Activated CD4-positive, alpha-beta memory T cell treated with anti-CD3 and anti-CD28 coated beads for 36 hours (primary cell): ENCODE measurements at regions of chr13 and their contacts with region 1.

Region 1: DNA sequence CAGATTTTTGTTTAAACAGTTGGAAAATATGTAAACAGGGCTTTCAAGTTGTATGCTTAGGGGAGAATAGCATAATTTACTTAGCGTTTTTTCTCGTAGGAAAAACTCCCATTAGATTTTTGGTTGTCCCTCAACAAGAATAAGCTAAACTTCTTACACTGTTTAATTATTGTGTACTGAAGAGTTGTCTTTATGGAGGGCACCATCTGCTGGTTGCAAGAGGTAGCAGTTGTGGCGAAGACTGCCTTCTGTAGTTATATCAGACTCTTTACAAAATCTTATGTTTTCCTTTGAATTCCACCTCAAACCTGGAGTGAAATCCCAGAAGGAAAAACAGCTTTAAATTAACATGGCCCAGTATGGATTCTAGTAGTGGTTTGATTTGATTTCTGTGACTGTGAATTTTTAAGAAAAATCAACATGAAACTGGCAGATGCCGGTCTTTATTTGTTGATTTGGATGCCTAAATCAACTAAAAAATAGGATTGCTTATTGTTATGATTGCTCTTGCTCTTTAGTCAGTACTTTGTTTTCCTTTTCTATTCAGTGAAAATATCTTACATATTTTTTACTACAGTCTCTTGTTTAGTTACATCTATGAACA is 53.4 kb downstream of the PDS5B start:
- DNase-seq: peak; percentile 56
- H3K4me3 Mint-ChIP-seq: no peak overlapping the region
- H3K27ac Mint-ChIP-seq: no peak overlapping the region
- H3K4me1 Mint-ChIP-seq: peaks cover 41% of the 10 kb centered on the region
- H3K27me3 Mint-ChIP-seq: no peaks in the 10 kb centered on the region

Region 2: GRCh38 chr13:32472194-32472621 is 167.4 kb before region 1 on chr13:
- CTCF ChIA-PET with region 1: interaction called, 3 read pairs
- POLR2A ChIA-PET with region 1: no interaction called
- intact Hi-C with region 1: loop called (anchors 5 kb)
- DNase-seq: no peak
- H3K4me3 Mint-ChIP-seq: no peak overlapping the region
- H3K27ac Mint-ChIP-seq: peak overlapping the region; percentile 84
- H3K4me1 Mint-ChIP-seq: peaks cover 18% of the 10 kb centered on the region
- H3K27me3 Mint-ChIP-seq: no peaks in the 10 kb centered on the region

Region 3: GRCh38 chr13:32622827-32623226 is 16.8 kb before region 1 on chr13:
- CTCF ChIA-PET with region 1: interaction called, 15 read pairs
- POLR2A ChIA-PET with region 1: interaction called, 3 read pairs
- intact Hi-C with region 1: loop called (anchors 1 kb)
- DNase-seq: peak; percentile 56
- H3K4me3 Mint-ChIP-seq: no peak overlapping the region
- H3K27ac Mint-ChIP-seq: peak overlapping the region; percentile 83
- H3K4me1 Mint-ChIP-seq: peaks cover 48% of the 10 kb centered on the region
- H3K27me3 Mint-ChIP-seq: no peaks in the 10 kb centered on the region

Region 4: GRCh38 chr13:32669030-32669646 is 29.5 kb after region 1 on chr13:
- CTCF ChIA-PET with region 1: interaction called, 10 read pairs
- POLR2A ChIA-PET with region 1: no interaction called
- intact Hi-C with region 1: no loop called
- DNase-seq: no peak
- H3K4me3 Mint-ChIP-seq: no peak overlapping the region
- H3K27ac Mint-ChIP-seq: no peak overlapping the region
- H3K4me1 Mint-ChIP-seq: no peaks in the 10 kb centered on the region
- H3K27me3 Mint-ChIP-seq: no peaks in the 10 kb centered on the region

Region 5: DNA sequence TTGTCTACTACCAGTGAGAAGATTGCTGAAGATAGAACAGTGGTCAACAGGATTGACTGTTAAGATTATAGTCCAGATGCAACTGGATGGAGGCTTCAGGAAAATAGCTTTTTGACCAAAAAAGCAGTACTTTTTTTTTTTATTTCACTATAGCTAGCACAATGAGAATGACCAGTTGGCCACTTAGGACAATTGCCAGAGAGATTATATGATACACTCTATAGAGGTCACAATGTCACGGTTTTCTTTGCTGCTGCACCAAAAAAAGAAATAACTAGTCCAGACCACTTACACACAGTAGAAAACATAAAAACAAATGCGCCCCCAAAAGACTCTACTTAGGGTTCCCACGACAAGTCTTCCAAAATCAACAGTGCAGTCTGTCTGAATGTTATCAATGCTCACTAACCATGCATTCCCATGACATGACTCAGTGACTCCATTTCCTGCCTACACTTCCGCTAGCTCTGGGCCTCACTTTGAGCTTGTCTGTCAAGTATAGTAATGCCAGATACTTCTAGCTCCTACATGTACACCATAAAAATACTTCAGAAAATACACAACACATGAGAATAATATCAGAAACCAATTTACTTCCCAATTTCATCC is 855.1 kb after region 1 on chr13:
- CTCF ChIA-PET with region 1: no interaction called
- POLR2A ChIA-PET with region 1: no interaction called
- intact Hi-C with region 1: no loop called
- DNase-seq: no peak
- H3K4me3 Mint-ChIP-seq: no peak overlapping the region
- H3K27ac Mint-ChIP-seq: peak overlapping the region; percentile 46
- H3K4me1 Mint-ChIP-seq: peaks cover 5% of the 10 kb centered on the region
- H3K27me3 Mint-ChIP-seq: peaks cover 6% of the 10 kb centered on the region